ENCODE measurements at regions of chr21 and their contacts with region 1.

Region 1: DNA sequence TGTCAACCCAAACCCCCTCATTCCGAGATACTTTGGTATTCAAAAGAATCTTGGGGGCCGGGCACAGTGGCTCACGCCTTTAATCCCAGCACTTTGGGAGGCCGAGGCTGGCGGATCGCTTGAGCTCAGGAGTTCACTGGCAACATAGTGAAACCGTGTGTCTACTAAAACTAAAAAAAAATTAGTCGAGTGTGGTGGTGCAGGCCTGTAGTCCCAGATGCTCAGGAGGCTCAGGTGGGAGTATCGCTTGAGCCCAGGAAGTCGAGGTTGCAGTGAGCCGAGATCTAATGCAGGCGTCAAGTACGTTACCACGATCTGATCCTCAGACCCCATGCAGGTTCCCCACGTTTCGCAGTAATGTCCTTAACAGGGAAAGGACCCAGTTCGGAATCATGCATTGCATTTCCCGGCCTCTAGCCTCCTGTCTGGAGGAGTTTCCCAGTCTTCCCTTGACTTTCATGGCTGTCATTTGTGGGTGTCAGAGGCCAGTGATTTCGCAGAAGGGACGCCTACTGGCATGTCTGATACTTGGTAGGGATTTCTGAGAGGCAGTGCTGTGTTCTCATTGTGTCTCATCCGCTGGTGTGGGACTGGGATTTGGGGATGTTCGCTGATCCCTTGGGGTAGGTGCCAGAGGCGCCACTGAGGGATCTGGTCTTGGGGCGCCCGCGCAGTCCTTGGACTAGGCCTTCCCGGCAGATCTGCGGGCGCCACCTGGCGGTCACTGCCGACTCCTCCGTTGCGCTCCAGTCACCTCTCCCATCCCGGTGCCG is 39.3 kb upstream of the HMGN1 start:
- DNase-seq: no peak
- H3K4me3 ChIP-seq: peak overlapping the region; percentile 51
- H3K27me3 ChIP-seq: no peaks in the 10 kb centered on the region
- CTCF ChIP-seq: peak; percentile 97

Region 2: DNA sequence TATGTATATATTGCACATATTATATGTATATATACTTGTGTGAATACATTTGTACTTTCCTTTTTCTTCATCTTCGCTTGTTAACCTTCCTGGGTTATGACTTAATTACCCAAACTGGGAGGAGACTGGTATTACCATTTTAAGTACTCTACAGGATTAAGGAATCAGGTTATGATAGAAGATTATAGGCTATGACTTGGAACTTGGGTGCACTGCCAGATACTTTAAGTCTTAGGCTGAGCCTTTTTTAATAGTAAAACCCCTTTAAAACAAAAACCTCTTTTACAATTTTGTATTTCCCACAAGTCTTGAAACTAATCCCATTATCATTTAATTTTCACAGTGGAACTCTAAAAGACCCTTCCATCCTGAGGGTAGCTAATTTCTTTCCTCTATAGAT is 80.8 kb before region 1 on chr21:
- CTCF ChIA-PET with region 1: no interaction called
- POLR2A ChIA-PET with region 1: no interaction called
- DNase-seq: no peak
- H3K4me3 ChIP-seq: no peak overlapping the region
- H3K27me3 ChIP-seq: no peaks in the 10 kb centered on the region
- CTCF ChIP-seq: no peak

Region 3: GRCh38 chr21:39363607-39364555 is 24.3 kb before region 1 on chr21:
- CTCF ChIA-PET with region 1: interaction called, 3 read pairs
- POLR2A ChIA-PET with region 1: interaction called, 11 read pairs
- DNase-seq: no peak
- H3K4me3 ChIP-seq: no peak overlapping the region
- H3K27me3 ChIP-seq: peaks cover 3% of the 10 kb centered on the region
- CTCF ChIP-seq: no peak

Region 4: GRCh38 chr21:39441502-39442475 is 53.6 kb after region 1 on chr21:
- CTCF ChIA-PET with region 1: interaction called, 12 read pairs
- POLR2A ChIA-PET with region 1: no interaction called
- DNase-seq: no peak
- H3K4me3 ChIP-seq: no peak overlapping the region
- H3K27me3 ChIP-seq: no peaks in the 10 kb centered on the region
- CTCF ChIP-seq: peak; percentile 86

Measured in BJ (cell line).